ENCODE measurements at regions of chr10 and their contacts with region 1.

Region 1: DNA sequence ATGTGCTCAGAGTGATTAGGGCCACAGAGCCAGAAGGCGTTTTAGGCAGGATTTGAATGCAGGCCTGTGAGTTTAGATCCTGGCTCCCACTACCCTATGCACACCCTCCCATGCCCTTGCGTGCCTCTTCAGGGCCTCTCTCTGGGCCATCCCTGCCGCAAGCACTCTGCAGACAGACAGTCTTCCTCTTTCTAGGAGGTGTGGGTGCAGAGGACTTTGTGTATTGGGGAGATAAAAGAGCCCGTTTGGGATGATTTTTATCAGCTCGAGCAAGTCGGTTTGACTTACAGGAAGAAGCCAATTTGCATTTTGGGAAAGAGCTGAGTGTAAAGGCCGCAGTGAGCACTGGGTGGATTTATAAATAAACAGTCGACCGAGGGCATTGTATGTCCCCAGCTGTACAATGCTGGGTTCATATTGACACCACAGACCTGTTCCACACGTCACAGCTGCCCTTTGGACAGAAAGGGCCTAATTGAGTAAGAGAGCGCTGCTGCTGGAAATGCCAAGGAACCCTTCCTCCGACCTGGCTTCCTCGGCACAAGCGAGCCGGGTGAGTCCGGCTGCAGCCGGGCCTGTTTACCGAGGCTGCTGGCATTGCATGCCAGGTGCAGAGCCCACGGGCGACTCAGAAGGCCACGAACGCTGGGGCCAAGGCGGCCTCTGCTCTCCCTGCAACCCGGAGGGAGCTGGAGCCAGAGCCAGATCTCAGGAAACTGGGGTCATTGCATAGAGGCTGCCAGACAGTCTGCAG is 25.1 kb downstream of the ZMIZ1 start:
- DNase-seq: no peak
- ATAC-seq: peak; percentile 53

Region 2: DNA sequence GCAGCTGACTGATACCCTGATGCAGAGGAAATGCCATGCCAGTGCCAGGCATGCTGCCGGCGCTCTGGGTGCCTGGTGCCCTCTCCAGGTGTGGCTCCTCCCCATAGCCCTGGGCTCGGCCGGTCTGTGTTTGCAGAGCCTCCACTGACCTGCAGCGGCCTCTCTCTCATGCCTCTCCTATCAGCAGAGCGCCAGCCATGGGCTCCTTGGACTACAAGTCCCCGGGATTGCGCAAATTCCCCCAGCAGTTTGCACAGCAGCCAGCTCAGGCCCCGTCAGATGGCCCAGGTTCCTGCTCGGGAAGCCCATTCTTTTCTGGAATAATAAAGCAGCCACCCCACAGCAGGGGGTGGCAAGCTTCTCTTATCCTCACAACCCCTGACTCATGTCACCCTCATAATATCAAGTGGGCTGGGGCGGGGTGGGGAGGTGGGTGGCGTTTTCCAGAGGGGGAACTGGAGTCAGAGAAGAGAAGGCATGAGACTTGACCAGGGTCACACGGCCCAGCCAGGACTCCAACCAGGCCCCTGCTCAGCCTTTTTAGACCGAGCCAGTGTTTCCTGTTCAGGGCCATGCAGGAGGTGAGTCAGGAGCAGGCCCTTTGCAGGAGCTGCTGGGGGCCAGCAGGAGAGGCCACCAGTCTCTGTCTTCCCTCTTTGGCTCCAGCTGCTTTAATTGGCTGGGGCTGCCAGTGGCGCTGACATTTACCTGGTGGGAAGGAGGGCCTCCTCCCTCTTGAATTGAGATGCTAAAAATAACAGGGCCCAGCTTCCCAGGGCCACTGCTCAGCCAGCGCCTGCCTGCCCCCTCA is 33.5 kb after region 1 on chr10:
- intact Hi-C with region 1: loop called (anchors 5 kb)
- DNase-seq: peak; percentile 87
- ATAC-seq: peak; percentile 74

Measured in Right ventricle myocardium inferior (tissue), 1 donor.